Activated CD4-positive, alpha-beta T cell treated with anti-CD3 and anti-CD28 coated beads for 36 hours (primary cell): ENCODE measurements at regions of chr17 and their contacts with region 1.

Region 1: GRCh38 chr17:58631523-58632323 is 60.1 kb downstream of the TEX14 start:
- DNase-seq: peak; percentile 96
- ATAC-seq: peak; percentile 97
- H3K4me3 Mint-ChIP-seq: no peak overlapping the region
- H3K27ac Mint-ChIP-seq: no peak overlapping the region
- H3K4me1 Mint-ChIP-seq: peaks cover 3% of the 10 kb centered on the region
- H3K27me3 Mint-ChIP-seq: no peaks in the 10 kb centered on the region

Region 2: GRCh38 chr17:58337600-58338453 is 293.9 kb before region 1 on chr17:
- CTCF ChIA-PET with region 1: no interaction called
- POLR2A ChIA-PET with region 1: interaction called, 8 read pairs
- intact Hi-C with region 1: loop called (anchors 5 to 10 kb)
- DNase-seq: peak; percentile 97
- ATAC-seq: peak; percentile 57
- H3K4me3 Mint-ChIP-seq: peak overlapping the region; percentile 100
- H3K27ac Mint-ChIP-seq: peak overlapping the region; percentile 99
- H3K4me1 Mint-ChIP-seq: peaks cover 26% of the 10 kb centered on the region
- H3K27me3 Mint-ChIP-seq: no peaks in the 10 kb centered on the region

Region 3: GRCh38 chr17:58531661-58532554 is 99.8 kb before region 1 on chr17:
- CTCF ChIA-PET with region 1: no interaction called
- POLR2A ChIA-PET with region 1: interaction called, 12 read pairs
- intact Hi-C with region 1: loop called in 1 of 2 experiments (anchors 5 kb)
- DNase-seq: peak; percentile 70
- ATAC-seq: peak; percentile 92
- H3K4me3 Mint-ChIP-seq: peak overlapping the region; percentile 31
- H3K27ac Mint-ChIP-seq: no peak overlapping the region
- H3K4me1 Mint-ChIP-seq: no peaks in the 10 kb centered on the region
- H3K27me3 Mint-ChIP-seq: peaks cover 19% of the 10 kb centered on the region

Region 4: GRCh38 chr17:58611331-58611730 is 20.4 kb before region 1 on chr17:
- CTCF ChIA-PET with region 1: no interaction called
- POLR2A ChIA-PET with region 1: interaction called, 10 read pairs
- intact Hi-C with region 1: no loop called
- DNase-seq: no peak
- ATAC-seq: no peak
- H3K4me3 Mint-ChIP-seq: no peak overlapping the region
- H3K27ac Mint-ChIP-seq: no peak overlapping the region
- H3K4me1 Mint-ChIP-seq: peaks cover 9% of the 10 kb centered on the region
- H3K27me3 Mint-ChIP-seq: no peaks in the 10 kb centered on the region

Region 5: DNA sequence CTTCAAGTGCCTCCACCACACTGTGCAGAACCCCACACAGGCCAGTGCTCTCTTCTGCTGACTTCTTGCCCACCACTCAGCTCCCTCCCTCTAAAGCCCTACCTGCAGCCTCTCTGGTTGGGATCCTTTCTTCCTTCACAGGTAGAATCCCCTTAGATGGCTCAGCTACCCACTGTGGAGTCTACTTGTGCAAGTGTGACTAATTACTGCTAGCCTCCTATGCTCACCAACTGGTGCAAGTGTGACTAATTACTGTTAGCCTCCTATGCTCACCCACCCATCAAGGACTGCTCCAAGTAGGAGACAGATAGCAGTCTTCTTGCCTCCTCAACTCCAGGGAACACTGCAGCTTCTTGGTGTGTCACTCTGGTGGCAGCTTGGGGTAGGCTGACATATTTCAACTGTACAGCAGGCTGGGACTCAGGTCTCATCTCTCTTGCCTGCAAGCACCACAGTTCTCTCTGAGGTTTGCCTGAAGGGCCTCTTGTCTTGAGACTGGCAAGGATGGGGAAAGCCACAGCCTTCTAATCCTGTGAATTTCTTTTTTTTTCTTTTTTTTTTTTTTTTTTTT is 16.6 kb after region 1 on chr17:
- CTCF ChIA-PET with region 1: interaction called, 7 read pairs
- POLR2A ChIA-PET with region 1: interaction called, 23 read pairs
- intact Hi-C with region 1: no loop called
- DNase-seq: no peak
- ATAC-seq: peak; percentile 26
- H3K4me3 Mint-ChIP-seq: no peak overlapping the region
- H3K27ac Mint-ChIP-seq: no peak overlapping the region
- H3K4me1 Mint-ChIP-seq: no peaks in the 10 kb centered on the region
- H3K27me3 Mint-ChIP-seq: no peaks in the 10 kb centered on the region

Region 6: GRCh38 chr17:58692239-58693055 is 60.7 kb after region 1 on chr17 and contains the start of gene RAD51C:
- CTCF ChIA-PET with region 1: interaction called, 3 read pairs
- POLR2A ChIA-PET with region 1: interaction called, 61 read pairs
- intact Hi-C with region 1: loop called (anchors 1 to 2 kb)
- DNase-seq: peak; percentile 94
- ATAC-seq: peak; percentile 96
- H3K4me3 Mint-ChIP-seq: peak within 1 kb of the TSS; percentile 92
- H3K27ac Mint-ChIP-seq: peak within 1 kb of the TSS; percentile 98
- H3K4me1 Mint-ChIP-seq: peaks cover 27% of the 10 kb centered on the region
- H3K27me3 Mint-ChIP-seq: no peaks in the 10 kb centered on the region
- total RNA-seq, gene RAD51C: 85.4 to 87.2 TPM

Region 7: DNA sequence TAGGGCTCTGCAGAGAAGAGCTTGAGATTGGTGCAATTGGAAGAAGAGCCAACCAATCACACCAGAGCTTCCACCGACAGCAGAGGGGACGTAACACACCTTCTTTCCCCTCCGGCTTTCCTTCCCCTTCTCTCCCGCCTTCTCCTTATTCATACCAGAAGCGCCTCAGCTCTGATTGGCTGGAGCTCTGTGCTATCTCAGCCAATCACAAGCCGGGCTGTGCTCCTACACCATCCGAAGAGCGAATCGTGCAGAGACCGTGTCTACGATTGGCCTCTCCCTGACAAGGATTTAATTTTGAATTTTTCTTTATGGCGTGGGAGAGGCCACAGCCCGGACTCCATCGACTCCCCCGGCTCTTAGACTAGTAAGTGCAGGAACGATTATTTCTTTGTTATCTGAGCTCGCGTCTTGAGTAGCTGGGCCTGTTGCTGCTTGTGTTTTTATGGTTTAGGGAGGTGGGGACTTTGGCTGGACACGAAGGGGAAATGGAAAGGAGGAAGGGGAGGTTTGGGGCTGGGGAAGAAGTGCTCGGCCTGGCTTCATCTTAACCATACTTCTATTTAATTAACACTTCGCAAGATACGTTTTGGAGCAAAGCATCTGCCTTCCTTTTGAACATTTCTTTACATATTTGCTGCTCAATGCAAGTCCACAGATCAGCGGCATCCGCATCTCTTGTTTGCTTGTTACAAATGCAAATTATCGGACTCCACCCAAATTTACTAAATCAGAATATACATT is 523.9 kb after region 1 on chr17 and contains the start of gene PRR11:
- CTCF ChIA-PET with region 1: no interaction called
- POLR2A ChIA-PET with region 1: interaction called, 23 read pairs
- intact Hi-C with region 1: no loop called
- DNase-seq: peak; percentile 96
- ATAC-seq: peak; percentile 89
- H3K4me3 Mint-ChIP-seq: no peak within 1 kb of the TSS
- H3K27ac Mint-ChIP-seq: no peak within 1 kb of the TSS
- H3K4me1 Mint-ChIP-seq: peaks cover 37% of the 10 kb centered on the region
- H3K27me3 Mint-ChIP-seq: no peaks in the 10 kb centered on the region
- total RNA-seq, gene PRR11: 73.6 to 95.9 TPM

Region 8: GRCh38 chr17:59676716-59677115 is 1045.0 kb after region 1 on chr17:
- CTCF ChIA-PET with region 1: no interaction called
- POLR2A ChIA-PET with region 1: no interaction called
- intact Hi-C with region 1: no loop called
- DNase-seq: no peak
- ATAC-seq: no peak
- H3K4me3 Mint-ChIP-seq: no peak overlapping the region
- H3K27ac Mint-ChIP-seq: no peak overlapping the region
- H3K4me1 Mint-ChIP-seq: peaks cover under 1% of the 10 kb centered on the region
- H3K27me3 Mint-ChIP-seq: no peaks in the 10 kb centered on the region